OCI-LY7 (cell line): ENCODE measurements at regions of chr2 and their contacts with region 1.

Region 1: DNA sequence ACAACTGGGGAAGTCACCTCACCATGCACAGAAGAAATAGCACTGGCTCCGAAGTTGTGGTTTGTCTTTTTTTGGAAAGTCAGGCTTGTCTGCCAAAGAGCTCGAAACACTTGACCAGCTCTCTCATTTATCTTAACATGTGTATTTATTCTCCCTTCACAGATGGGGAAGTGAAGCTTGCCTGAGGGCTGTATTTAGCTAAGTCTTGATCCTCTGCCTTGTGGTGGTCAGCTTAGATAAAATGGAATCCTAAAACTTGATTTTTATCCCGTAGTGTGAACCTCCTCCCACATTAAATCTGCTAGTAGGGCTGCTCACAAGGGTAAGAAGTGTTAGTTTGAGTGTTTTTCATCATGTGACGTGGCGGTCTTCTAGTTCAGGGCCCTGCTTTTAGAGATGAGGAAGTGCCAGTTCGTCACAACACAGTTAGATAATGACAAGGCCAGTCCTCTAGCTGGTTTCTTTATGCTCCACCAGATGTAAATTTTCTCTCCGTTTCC is 89.7 kb downstream of the TMEM247 start:
- DNase-seq: peak; percentile 88
- H3K4me3 ChIP-seq: peak overlapping the region; percentile 57
- H3K27ac ChIP-seq: peak overlapping the region; percentile 100
- H3K4me1 ChIP-seq: peaks cover 99% of the 10 kb centered on the region
- CTCF ChIP-seq: no peak

Region 2: DNA sequence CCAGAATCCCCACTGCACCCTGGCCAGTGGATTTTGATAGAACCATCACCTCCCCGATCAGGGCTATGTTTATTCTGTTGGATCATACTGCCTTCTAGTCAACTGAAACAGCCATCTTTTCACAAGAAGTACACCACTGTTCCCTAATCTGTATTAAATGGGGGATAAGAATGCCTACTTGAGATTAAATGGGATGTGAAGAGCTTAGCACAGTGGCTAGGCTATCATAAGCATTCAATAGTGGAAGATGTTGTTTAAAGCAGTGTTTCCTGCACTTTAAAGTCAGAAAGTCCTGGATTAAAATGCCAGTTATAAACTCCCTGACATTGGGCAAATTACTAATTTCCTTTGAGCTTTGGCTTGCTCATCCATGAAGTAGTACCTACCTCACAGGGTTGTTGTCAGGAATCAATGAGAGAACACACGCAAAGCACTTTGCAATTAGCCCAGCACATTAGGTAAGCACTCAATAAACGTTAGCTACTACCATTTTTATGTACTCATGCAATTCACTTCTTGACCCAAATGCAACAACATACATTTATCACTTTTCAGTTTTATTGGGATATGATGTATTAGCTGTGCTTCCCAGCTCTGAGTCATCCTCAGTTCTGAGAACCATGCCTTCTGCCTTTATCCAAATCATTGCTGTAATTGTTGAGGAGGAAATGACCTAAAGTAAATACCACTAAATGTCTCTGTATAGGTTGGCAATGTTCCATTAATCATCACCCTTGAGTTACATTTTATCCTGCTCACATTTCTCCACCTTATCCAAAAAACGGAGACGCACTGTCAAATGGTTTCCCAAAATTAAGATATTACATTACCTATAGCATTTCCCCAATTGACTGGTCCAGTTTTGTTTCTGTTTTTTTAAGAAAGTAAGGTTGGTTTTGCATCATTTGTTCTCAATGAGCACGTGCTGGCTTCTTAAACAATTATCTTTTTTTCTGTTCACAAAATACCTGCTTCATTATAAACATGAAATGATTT is 87.6 kb before region 1 on chr2:
- CTCF ChIA-PET with region 1: no interaction called
- POLR2A ChIA-PET with region 1: no interaction called
- intact Hi-C with region 1: no loop called
- DNase-seq: no peak
- H3K4me3 ChIP-seq: no peak overlapping the region
- H3K27ac ChIP-seq: no peak overlapping the region
- H3K4me1 ChIP-seq: peaks cover 10% of the 10 kb centered on the region
- CTCF ChIP-seq: no peak

Region 3: DNA sequence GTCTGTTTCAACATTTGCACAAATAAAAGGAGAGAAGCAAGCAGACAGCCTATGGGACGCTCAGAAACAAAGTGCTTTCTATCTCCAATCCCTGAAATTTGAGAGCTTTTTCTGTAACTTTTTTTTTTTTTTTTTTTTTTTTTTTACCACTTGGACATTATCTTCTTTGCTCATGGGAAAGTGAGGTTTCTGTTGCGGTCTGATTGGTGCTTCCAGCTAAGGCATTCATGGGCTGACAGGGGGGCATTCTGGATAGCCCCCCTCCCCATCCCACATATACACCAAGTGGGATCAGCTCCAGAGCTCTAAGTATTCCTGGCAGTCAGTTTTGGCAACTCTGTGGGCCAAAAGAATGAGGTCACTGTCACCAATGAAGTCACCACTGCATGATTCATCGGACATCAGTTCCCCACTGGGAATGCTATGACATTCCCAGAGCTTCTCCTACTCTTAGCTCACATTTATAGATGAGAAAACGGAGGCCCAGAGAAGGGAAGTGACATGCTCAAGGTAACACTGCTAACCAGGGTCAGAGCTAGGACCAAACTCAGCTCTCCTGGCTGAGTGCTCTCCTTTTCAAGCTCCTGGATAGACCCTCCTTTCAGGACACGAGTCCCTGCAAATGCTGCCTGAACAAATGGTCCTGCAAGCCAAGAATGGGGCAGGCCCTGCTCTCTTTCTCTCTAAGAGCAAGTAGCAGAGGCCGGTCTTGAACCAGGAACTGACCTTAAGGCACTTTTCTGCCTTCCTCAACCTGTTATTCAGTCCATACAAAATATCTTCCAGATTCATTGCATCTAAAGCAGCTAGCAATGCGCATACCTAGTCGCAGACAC is 28.4 kb before region 1 on chr2:
- CTCF ChIA-PET with region 1: interaction called, 9 read pairs
- POLR2A ChIA-PET with region 1: interaction called, 22 read pairs
- intact Hi-C with region 1: no loop called
- DNase-seq: no peak
- H3K4me3 ChIP-seq: peak overlapping the region; percentile 71
- H3K27ac ChIP-seq: no peak overlapping the region
- H3K4me1 ChIP-seq: peaks cover 69% of the 10 kb centered on the region
- CTCF ChIP-seq: no peak

Region 4: GRCh38 chr2:46548103-46548486 is 21.0 kb before region 1 on chr2:
- CTCF ChIA-PET with region 1: interaction called, 5 read pairs
- POLR2A ChIA-PET with region 1: interaction called, 18 read pairs
- intact Hi-C with region 1: no loop called
- DNase-seq: no peak
- H3K4me3 ChIP-seq: peak overlapping the region; percentile 38
- H3K27ac ChIP-seq: peak overlapping the region; percentile 53
- H3K4me1 ChIP-seq: peaks cover 89% of the 10 kb centered on the region
- CTCF ChIP-seq: no peak

Region 5: GRCh38 chr2:46555011-46555410 is 14.1 kb before region 1 on chr2:
- CTCF ChIA-PET with region 1: interaction called, 12 read pairs
- POLR2A ChIA-PET with region 1: interaction called, 123 read pairs
- intact Hi-C with region 1: no loop called
- DNase-seq: peak; percentile 63
- H3K4me3 ChIP-seq: no peak overlapping the region
- H3K27ac ChIP-seq: peak overlapping the region; percentile 5
- H3K4me1 ChIP-seq: peaks cover 68% of the 10 kb centered on the region
- CTCF ChIP-seq: peak; percentile 86

Region 6: DNA sequence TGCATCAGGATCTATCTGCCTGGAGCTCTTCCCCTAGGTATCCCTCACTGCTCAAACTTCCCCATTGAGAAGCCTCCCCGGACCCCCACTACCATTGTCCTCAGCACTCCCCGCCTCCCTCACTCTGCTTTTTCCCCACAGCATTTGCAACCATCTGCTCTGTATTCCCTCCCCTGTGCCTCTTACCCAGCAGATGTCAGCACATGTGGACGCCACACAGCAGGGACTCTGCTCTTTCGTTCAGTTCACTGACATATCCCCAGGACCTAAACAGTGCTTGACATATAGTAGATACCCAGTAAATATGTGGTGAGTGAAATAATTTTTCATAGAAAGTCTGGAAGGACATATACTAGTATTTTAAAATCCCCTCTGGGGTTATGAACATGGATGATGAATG is 11.3 kb after region 1 on chr2:
- CTCF ChIA-PET with region 1: interaction called, 4 read pairs
- POLR2A ChIA-PET with region 1: interaction called, 123 read pairs
- intact Hi-C with region 1: no loop called
- DNase-seq: no peak
- H3K4me3 ChIP-seq: no peak overlapping the region
- H3K27ac ChIP-seq: no peak overlapping the region
- H3K4me1 ChIP-seq: peaks cover 28% of the 10 kb centered on the region
- CTCF ChIP-seq: no peak

Region 7: GRCh38 chr2:46589358-46589757 is 20.2 kb after region 1 on chr2:
- CTCF ChIA-PET with region 1: interaction called, 3 read pairs
- POLR2A ChIA-PET with region 1: interaction called, 23 read pairs
- intact Hi-C with region 1: no loop called
- DNase-seq: no peak
- H3K4me3 ChIP-seq: no peak overlapping the region
- H3K27ac ChIP-seq: no peak overlapping the region
- H3K4me1 ChIP-seq: peaks cover 10% of the 10 kb centered on the region
- CTCF ChIP-seq: no peak